H1 (cell line): ENCODE measurements at regions of chr12 and their contacts with region 1.

Region 1: DNA sequence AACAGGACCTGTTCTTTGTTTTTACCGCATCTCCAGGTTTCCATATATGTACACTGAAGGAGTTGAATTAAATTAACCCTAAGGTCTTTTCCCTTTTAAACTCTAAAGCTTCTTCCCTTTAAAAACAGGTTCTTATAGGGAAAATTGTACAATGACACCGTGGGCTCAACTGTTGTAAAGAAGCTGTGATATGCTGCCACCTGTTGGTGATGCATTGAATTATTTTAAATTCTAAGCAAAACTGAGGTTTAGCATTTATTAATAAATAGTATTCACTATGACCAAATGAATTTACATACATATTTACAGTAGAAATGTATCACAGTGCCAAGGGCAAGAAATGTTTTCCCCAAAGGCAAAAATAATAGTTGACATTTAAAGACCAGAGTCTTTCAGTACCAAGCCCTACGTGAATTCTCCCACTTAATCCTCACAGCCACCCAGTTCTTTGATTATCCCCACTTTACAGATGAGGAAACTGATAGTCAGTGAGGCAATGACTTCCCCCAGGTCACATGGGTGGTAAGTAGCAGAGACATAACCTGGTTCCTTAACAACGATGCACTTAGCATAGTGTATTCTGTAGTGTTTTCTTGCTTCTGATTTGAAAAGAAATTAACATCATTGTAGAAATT is 35.7 kb upstream of the TMEM263 start:
- DNase-seq: no peak
- H3K4me3 ChIP-seq: peak overlapping the region in 1 of 4 experiments; percentile 18; a peak in 1 of 8 replicates
- H3K27ac ChIP-seq: no peak overlapping the region
- H3K4me1 ChIP-seq: peaks cover 0 to 15% (median 14%) of the 10 kb centered on the region in 4 experiments; a peak in 4 of 7 replicates
- H3K27me3 ChIP-seq: no peaks in the 10 kb centered on the region; a peak in 2 of 7 replicates
- CTCF ChIP-seq: peak in 2 of 3 experiments; percentile 41 to 57; a peak in 2 of 4 replicates
- EP300 ChIP-seq: no peak
- POLR2A ChIP-seq: no peak
- RAD21 ChIP-seq: peak; percentile 77 to 80

Region 2: DNA sequence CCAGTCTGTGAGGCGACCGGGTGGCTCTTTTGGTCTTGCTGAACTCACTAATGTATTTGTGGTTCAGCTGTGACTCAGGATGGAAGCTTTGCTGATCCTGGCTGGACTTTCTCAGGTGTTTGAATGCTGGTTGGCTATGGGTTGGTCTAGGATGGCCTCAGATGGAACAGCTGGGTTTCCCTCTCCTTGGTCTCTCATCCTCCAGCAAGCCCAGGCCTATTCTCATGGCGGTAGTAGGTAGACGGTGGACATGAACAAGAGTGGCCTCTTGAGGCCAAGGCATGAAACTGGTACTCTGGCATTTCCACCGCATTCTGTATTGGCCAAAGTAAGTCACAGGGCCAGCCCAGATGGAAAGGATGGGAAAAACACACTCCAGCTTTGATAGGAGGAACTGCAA is 574.3 kb before region 1 on chr12:
- CTCF ChIA-PET with region 1: interaction called, 10 read pairs
- POLR2A ChIA-PET with region 1: no interaction called
- DNase-seq: no peak
- H3K4me3 ChIP-seq: no peak overlapping the region
- H3K27ac ChIP-seq: no peak overlapping the region
- H3K4me1 ChIP-seq: no peaks in the 10 kb centered on the region
- H3K27me3 ChIP-seq: no peaks in the 10 kb centered on the region
- CTCF ChIP-seq: peak; percentile 57 to 79 (median 57)
- EP300 ChIP-seq: no peak
- POLR2A ChIP-seq: no peak
- RAD21 ChIP-seq: peak; percentile 73 to 77

Region 3: GRCh38 chr12:106357549-106358395 is 562.3 kb before region 1 on chr12 and contains the start of gene POLR3B:
- CTCF ChIA-PET with region 1: interaction called, 33 read pairs
- POLR2A ChIA-PET with region 1: interaction called, 15 read pairs
- DNase-seq: peak; percentile 81 to 94
- H3K4me3 ChIP-seq: peak within 1 kb of the TSS; percentile 64 to 91 (median 84)
- H3K27ac ChIP-seq: peak within 1 kb of the TSS; percentile 90
- H3K4me1 ChIP-seq: peaks cover 0 to 3% (median under 1%) of the 10 kb centered on the region in 4 experiments; a peak in 4 of 7 replicates
- H3K27me3 ChIP-seq: no peaks in the 10 kb centered on the region
- CTCF ChIP-seq: peak; percentile 86 to 89 (median 87)
- EP300 ChIP-seq: 0 out of 3 replicates have a peak, but pooled peaks of 1 of the 2 experiments have one; percentile 32
- POLR2A ChIP-seq: peak in 1 of 2 experiments; percentile 77; a peak in 2 of 3 replicates
- RAD21 ChIP-seq: peak; percentile 85
- total RNA-seq, gene POLR3B: 13.0 and 13.2 TPM in 2 replicates

Region 4: GRCh38 chr12:106364261-106364660 is 555.8 kb before region 1 on chr12:
- CTCF ChIA-PET with region 1: interaction called, 33 read pairs
- POLR2A ChIA-PET with region 1: no interaction called
- DNase-seq: no peak
- H3K4me3 ChIP-seq: no peak overlapping the region
- H3K27ac ChIP-seq: no peak overlapping the region
- H3K4me1 ChIP-seq: no peaks in the 10 kb centered on the region
- H3K27me3 ChIP-seq: no peaks in the 10 kb centered on the region
- CTCF ChIP-seq: no peak
- EP300 ChIP-seq: no peak
- POLR2A ChIP-seq: no peak
- RAD21 ChIP-seq: no peak

Region 5: GRCh38 chr12:106386813-106387535 is 533.1 kb before region 1 on chr12:
- CTCF ChIA-PET with region 1: interaction called, 18 read pairs
- POLR2A ChIA-PET with region 1: no interaction called
- DNase-seq: no peak
- H3K4me3 ChIP-seq: no peak overlapping the region
- H3K27ac ChIP-seq: no peak overlapping the region
- H3K4me1 ChIP-seq: no peaks in the 10 kb centered on the region
- H3K27me3 ChIP-seq: no peaks in the 10 kb centered on the region
- CTCF ChIP-seq: no peak
- EP300 ChIP-seq: no peak
- POLR2A ChIP-seq: no peak
- RAD21 ChIP-seq: no peak

Region 6: DNA sequence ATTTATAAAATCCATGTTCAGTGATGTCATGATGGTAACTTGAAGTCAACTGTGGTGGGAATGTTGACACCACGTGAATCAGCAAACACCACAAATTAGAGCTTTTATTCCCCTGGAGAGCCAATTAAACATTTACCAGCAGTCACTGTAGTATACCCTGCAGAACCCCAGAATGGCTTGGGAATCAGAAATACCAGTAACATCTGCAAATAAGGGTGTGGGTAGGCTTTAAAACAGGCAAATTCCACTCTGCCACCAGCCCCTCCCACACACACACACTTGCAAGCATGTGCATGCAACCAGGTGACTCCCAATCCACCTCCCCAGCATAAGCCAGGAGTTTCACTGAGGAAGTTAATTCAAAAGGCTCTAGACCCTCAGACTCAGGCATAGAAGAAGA is 28.0 kb before region 1 on chr12:
- CTCF ChIA-PET with region 1: interaction called, 11 read pairs
- POLR2A ChIA-PET with region 1: no interaction called
- DNase-seq: no peak
- H3K4me3 ChIP-seq: no peak overlapping the region
- H3K27ac ChIP-seq: no peak overlapping the region
- H3K4me1 ChIP-seq: no peaks in the 10 kb centered on the region
- H3K27me3 ChIP-seq: no peaks in the 10 kb centered on the region
- CTCF ChIP-seq: no peak
- EP300 ChIP-seq: no peak
- POLR2A ChIP-seq: no peak
- RAD21 ChIP-seq: no peak

Region 7: DNA sequence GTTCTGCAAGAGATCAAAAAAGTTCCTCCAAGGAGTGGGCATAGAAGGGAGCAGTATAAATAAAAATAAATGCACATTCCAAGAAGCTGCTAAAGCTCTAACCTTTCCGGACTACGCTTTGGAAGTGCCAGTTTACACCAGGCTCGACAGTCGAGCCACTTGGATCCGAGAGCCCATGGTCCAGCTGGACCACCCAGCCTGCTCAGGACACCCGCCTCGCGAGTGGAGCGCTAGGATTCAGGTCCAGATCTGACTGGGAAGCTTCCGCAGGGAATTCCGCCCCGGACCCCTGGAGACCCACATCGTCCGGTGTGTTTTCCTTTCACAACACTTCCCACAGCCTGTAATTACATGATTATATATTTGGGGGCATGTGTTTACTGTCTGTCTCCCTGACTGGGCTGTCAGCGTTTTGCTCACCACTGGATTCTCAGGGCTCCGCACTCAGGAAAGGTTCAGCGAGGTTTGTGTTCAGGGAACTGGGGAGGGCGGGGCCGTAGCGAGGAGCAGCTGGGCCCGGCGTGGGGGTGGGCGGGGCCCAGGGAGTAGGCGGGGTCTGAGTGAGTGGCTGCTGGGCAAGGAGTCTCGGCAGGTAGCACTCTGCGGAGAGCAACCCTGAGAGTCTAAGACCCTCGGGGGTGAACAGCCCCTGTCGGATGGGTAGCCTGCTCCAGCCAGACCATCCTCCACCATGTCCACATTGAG is 16.6 kb before region 1 on chr12:
- CTCF ChIA-PET with region 1: interaction called, 50 read pairs
- POLR2A ChIA-PET with region 1: no interaction called
- DNase-seq: peak; percentile 27 to 93
- H3K4me3 ChIP-seq: peak overlapping the region; percentile 50 to 71 (median 64)
- H3K27ac ChIP-seq: no peak overlapping the region
- H3K4me1 ChIP-seq: peaks cover 0 to 3% (median under 1%) of the 10 kb centered on the region in 4 experiments; a peak in 4 of 7 replicates
- H3K27me3 ChIP-seq: peaks cover 2 to 13% (median 9%) of the 10 kb centered on the region in 4 experiments; a peak in 6 of 7 replicates
- CTCF ChIP-seq: no peak
- EP300 ChIP-seq: no peak
- POLR2A ChIP-seq: no peak
- RAD21 ChIP-seq: no peak

Region 8: DNA sequence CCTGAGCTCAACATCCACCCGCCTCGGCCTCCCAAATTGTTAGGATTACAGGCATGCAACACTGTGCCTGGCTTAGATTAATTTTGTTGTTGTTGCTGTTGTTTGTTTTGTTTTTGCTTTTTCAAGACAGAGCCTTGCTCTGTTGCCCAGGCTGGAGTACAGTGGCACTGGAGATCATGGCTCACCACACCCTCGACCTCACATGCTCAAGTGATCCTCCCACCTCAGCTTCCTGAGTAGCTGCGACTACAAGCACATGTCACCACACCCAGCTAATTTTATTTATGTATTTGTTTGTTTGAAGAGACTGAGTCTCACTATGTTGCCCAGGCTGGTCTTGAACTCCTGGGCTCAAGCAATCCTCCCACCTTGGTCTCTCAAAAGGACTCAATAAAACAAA is 146.7 kb after region 1 on chr12:
- CTCF ChIA-PET with region 1: no interaction called
- POLR2A ChIA-PET with region 1: no interaction called
- DNase-seq: no peak
- H3K4me3 ChIP-seq: no peak overlapping the region
- H3K27ac ChIP-seq: no peak overlapping the region
- H3K4me1 ChIP-seq: no peaks in the 10 kb centered on the region
- H3K27me3 ChIP-seq: no peaks in the 10 kb centered on the region
- CTCF ChIP-seq: no peak
- EP300 ChIP-seq: no peak
- POLR2A ChIP-seq: no peak
- RAD21 ChIP-seq: no peak